GM12878 (cell line): ENCODE measurements at regions of chr6 and their contacts with region 1.

Region 1: DNA sequence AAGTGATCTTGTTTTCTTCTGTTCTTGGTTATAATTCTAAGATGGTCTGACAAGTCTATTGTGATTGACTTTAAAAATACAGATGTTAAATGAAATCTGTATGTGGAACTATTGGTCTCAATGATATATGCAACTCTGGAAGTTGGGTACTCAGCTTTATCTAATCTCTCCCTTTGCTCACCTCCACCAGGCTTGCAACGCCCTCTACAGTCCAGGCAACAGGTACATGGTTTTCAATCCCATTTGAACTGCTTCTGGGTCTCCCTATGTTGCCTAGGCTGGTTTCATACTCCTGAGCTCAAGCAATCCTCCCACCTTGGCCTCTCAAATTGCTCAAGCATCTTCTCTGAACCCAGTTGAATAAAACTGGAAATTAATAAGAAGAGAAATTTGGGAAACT is 25.6 kb upstream of the HLA-DQB1 start:
- DNase-seq: peak; percentile 50
- ATAC-seq: peak; percentile 77
- H3K4me3 ChIP-seq: no peak overlapping the region
- H3K27ac ChIP-seq: no peak overlapping the region
- H3K4me1 ChIP-seq: peaks cover 21% of the 10 kb centered on the region
- H3K27me3 ChIP-seq: no peaks in the 10 kb centered on the region; a peak in 1 of 4 replicates
- CTCF ChIP-seq: peak; percentile 68 to 84 (median 80)
- EP300 ChIP-seq: no peak
- POLR2A ChIP-seq: no peak
- RAD21 ChIP-seq: peak; percentile 97

Region 2: GRCh38 chr6:32413427-32414047 is 278.5 kb before region 1 on chr6:
- CTCF ChIA-PET with region 1: interaction called, 31 read pairs
- POLR2A ChIA-PET with region 1: no interaction called
- RAD21 ChIA-PET with region 1: interaction called, 10 read pairs
- SMC1A ChIA-PET with region 1: interaction called, 12 read pairs
- in situ Hi-C with region 1: no loop called
- intact Hi-C with region 1: no loop called
- DNase-seq: peak; percentile 40
- ATAC-seq: peak; percentile 94
- H3K4me3 ChIP-seq: no peak overlapping the region
- H3K27ac ChIP-seq: no peak overlapping the region
- H3K4me1 ChIP-seq: no peaks in the 10 kb centered on the region
- H3K27me3 ChIP-seq: no peaks in the 10 kb centered on the region; a peak in 2 of 4 replicates
- CTCF ChIP-seq: peak; percentile 84 to 96 (median 94)
- EP300 ChIP-seq: no peak
- POLR2A ChIP-seq: no peak
- RAD21 ChIP-seq: peak; percentile 83

Region 3: DNA sequence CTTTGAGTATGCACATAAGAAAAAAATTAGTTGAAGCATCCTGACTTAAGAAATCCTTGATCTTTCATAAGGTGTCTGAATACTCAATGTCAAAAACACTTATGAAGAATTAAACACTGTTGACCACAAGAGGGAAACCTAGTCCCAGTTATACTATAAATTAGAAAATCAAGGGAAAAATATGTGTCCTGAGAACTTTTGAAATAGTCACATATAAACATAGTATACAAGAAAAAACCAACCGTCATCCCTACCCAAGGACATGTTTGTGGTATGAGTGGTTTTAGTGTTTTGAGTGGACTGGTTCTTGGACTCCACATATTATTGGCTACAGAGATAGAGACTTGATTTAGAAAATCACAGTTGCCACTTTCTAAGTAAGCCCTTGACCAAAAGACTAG is 260.0 kb before region 1 on chr6:
- CTCF ChIA-PET with region 1: interaction called, 160 read pairs
- POLR2A ChIA-PET with region 1: interaction called, 12 read pairs
- RAD21 ChIA-PET with region 1: interaction called, 119 read pairs
- SMC1A ChIA-PET with region 1: interaction called, 154 read pairs
- in situ Hi-C with region 1: loop called (anchors 5 kb)
- intact Hi-C with region 1: loop called (anchors 1 kb)
- DNase-seq: no peak
- ATAC-seq: peak; percentile 55
- H3K4me3 ChIP-seq: no peak overlapping the region
- H3K27ac ChIP-seq: no peak overlapping the region
- H3K4me1 ChIP-seq: peaks cover 10% of the 10 kb centered on the region
- H3K27me3 ChIP-seq: no peaks in the 10 kb centered on the region
- CTCF ChIP-seq: peak in 2 of 3 experiments; percentile 41 to 62; a peak in 4 of 6 replicates
- EP300 ChIP-seq: no peak
- POLR2A ChIP-seq: no peak
- RAD21 ChIP-seq: peak; percentile 76

Region 4: DNA sequence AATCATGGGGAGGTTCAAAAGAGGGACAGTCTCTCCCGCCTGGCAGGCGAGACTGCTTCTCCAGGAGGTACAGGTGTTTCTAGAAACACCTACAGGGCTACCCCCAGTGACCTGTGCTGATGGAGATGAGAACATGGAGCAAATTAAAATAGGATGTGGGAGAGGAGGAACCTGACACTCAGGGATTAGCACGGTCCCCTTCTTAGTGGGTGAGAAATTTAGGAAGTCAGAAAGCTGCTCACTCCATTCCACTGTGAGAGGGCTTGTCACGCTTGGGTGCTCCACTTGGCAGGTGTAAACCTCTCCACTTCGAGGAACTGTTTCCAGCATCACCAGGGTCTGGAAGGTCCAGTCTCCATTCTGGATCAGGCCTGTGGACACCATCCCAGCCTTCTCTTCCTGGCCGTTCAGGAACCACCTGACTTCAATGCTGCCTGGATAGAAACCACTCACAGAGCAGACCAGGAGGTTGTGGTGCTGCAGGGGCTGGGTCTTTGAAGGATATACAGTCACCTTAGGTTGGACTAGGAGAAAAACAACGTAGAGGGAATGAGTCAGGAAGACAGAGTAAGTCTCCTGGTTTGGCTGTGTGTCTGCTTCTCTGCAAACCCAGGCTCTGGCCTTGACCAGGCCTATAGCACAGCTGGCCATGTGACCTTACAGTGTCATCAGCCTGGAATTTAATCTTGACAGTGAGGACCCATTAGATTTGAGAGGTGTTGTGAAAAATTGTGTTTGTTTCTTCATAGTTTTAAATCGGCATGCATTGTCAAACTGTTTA is 110.5 kb before region 1 on chr6:
- CTCF ChIA-PET with region 1: interaction called, 6 read pairs
- POLR2A ChIA-PET with region 1: interaction called, 12 read pairs
- RAD21 ChIA-PET with region 1: interaction called, 4 read pairs
- SMC1A ChIA-PET with region 1: interaction called, 3 read pairs
- in situ Hi-C with region 1: no loop called
- intact Hi-C with region 1: loop called (anchors 2 kb)
- DNase-seq: no peak
- ATAC-seq: no peak
- H3K4me3 ChIP-seq: no peak overlapping the region
- H3K27ac ChIP-seq: no peak overlapping the region
- H3K4me1 ChIP-seq: no peaks in the 10 kb centered on the region
- H3K27me3 ChIP-seq: no peaks in the 10 kb centered on the region
- CTCF ChIP-seq: no peak
- EP300 ChIP-seq: no peak
- POLR2A ChIP-seq: peak; percentile 43
- RAD21 ChIP-seq: no peak

Region 5: GRCh38 chr6:32622545-32623401 is 69.2 kb before region 1 on chr6:
- CTCF ChIA-PET with region 1: interaction called, 12 read pairs
- POLR2A ChIA-PET with region 1: interaction called, 7 read pairs
- RAD21 ChIA-PET with region 1: interaction called, 33 read pairs
- SMC1A ChIA-PET with region 1: interaction called, 26 read pairs
- in situ Hi-C with region 1: no loop called
- intact Hi-C with region 1: loop called (anchors 1 kb)
- DNase-seq: peak; percentile 96
- ATAC-seq: peak; percentile 91
- H3K4me3 ChIP-seq: peak overlapping the region; percentile 54
- H3K27ac ChIP-seq: peak overlapping the region; percentile 98
- H3K4me1 ChIP-seq: peaks cover 24% of the 10 kb centered on the region
- H3K27me3 ChIP-seq: no peaks in the 10 kb centered on the region
- CTCF ChIP-seq: peak; percentile 33 to 49 (median 48); a peak in 5 of 6 replicates
- EP300 ChIP-seq: peak in 1 of 2 experiments; percentile 96
- POLR2A ChIP-seq: peak; percentile 72
- RAD21 ChIP-seq: peak; percentile 40; the same call in 1 of the 2 replicates

Region 6: DNA sequence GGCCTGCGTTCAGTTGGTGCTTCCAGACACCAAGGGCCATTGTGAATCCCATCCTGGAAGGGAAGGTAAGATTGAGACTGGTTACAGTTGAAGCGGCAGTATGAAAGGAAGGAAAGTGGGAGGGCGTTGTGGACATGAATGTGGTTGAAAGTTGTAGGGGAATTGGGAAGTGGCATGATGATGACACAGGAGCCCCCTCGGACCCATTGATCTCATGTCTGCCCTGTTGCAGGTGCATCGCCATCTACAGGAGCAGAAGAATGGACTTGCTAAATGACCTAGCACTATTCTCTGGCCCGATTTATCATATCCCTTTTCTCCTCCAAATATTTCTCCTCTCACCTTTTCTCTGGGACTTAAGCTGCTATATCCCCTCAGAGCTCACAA is 49.3 kb before region 1 on chr6:
- CTCF ChIA-PET with region 1: interaction called, 11 read pairs
- POLR2A ChIA-PET with region 1: interaction called, 21 read pairs
- RAD21 ChIA-PET with region 1: interaction called, 20 read pairs
- SMC1A ChIA-PET with region 1: interaction called, 9 read pairs
- in situ Hi-C with region 1: no loop called
- intact Hi-C with region 1: no loop called
- DNase-seq: no peak
- ATAC-seq: peak; percentile 45
- H3K4me3 ChIP-seq: no peak overlapping the region
- H3K27ac ChIP-seq: no peak overlapping the region
- H3K4me1 ChIP-seq: peaks cover 4% of the 10 kb centered on the region
- H3K27me3 ChIP-seq: no peaks in the 10 kb centered on the region
- CTCF ChIP-seq: peak in 1 of 3 experiments; percentile 2; a peak in 1 of 6 replicates
- EP300 ChIP-seq: no peak
- POLR2A ChIP-seq: peak; percentile 53; the same call in 1 of the 2 replicates
- RAD21 ChIP-seq: no peak

Region 7: DNA sequence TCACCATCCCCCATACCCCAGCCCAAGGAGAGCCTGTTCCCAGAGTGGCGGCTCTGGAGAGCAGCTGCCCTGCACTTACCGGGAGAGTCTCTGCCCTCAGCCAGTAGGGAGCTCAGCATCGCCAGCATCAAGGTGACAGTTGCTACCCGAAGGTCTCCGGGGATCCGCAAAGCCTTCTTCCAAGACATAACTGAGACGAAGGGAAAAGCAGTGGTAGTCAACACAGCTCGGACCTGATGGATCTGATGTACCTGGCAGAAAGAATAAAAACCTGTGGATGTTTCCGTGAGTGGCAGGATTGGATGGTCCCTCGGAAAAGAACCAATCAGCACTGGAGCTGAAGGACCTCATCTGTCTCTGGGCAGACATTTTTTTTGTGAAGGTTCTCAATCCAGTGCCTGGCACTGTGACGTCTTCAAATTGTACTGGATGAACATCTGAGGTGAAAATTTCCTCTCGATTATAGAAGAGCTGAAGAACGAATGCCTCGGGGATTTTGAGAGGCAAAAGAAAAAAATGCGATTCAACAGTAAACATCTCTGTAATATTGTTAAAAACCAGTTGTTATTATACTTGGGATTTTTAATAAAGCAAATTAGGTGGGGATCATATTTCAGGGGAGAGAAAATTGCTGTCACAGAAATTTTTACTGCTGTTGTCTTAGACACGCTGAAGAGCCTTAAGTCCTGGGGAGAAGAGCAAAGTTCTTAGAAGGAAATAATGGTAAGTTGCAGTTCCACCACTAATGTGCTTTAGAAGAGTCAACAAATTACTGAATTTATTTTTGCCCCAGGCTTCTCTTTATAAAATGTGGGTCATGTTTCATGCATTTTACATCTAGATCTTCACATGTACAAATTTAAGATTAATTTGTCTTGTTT is 25.4 kb before region 1 on chr6 and contains the start of gene HLA-DQB1:
- CTCF ChIA-PET with region 1: interaction called, 16 read pairs
- POLR2A ChIA-PET with region 1: interaction called, 130 read pairs
- RAD21 ChIA-PET with region 1: interaction called, 16 read pairs
- SMC1A ChIA-PET with region 1: interaction called, 94 read pairs
- in situ Hi-C with region 1: no loop called
- intact Hi-C with region 1: no loop called
- DNase-seq: peak; percentile 77
- ATAC-seq: peak; percentile 70
- H3K4me3 ChIP-seq: peak within 1 kb of the TSS; percentile 55; the same call in 1 of the 2 replicates
- H3K27ac ChIP-seq: peak within 1 kb of the TSS; percentile 92
- H3K4me1 ChIP-seq: peaks cover 22% of the 10 kb centered on the region
- H3K27me3 ChIP-seq: no peaks in the 10 kb centered on the region
- CTCF ChIP-seq: no peak
- EP300 ChIP-seq: no peak
- POLR2A ChIP-seq: peak; percentile 72
- RAD21 ChIP-seq: no peak
- polyA plus RNA-seq, gene HLA-DQB1: 38.1 to 66.1 TPM

Region 8: GRCh38 chr6:32894080-32895005 is 202.3 kb after region 1 on chr6:
- CTCF ChIA-PET with region 1: no interaction called
- POLR2A ChIA-PET with region 1: no interaction called
- RAD21 ChIA-PET with region 1: no interaction called
- SMC1A ChIA-PET with region 1: no interaction called
- in situ Hi-C with region 1: no loop called
- intact Hi-C with region 1: no loop called
- DNase-seq: peak; percentile 91
- ATAC-seq: peak; percentile 98
- H3K4me3 ChIP-seq: peak overlapping the region; percentile 81
- H3K27ac ChIP-seq: peak overlapping the region; percentile 90
- H3K4me1 ChIP-seq: peaks cover 12% of the 10 kb centered on the region
- H3K27me3 ChIP-seq: no peaks in the 10 kb centered on the region
- CTCF ChIP-seq: no peak; a peak in 1 of 6 replicates
- EP300 ChIP-seq: no peak
- POLR2A ChIP-seq: peak; percentile 83
- RAD21 ChIP-seq: no peak

Region 9: DNA sequence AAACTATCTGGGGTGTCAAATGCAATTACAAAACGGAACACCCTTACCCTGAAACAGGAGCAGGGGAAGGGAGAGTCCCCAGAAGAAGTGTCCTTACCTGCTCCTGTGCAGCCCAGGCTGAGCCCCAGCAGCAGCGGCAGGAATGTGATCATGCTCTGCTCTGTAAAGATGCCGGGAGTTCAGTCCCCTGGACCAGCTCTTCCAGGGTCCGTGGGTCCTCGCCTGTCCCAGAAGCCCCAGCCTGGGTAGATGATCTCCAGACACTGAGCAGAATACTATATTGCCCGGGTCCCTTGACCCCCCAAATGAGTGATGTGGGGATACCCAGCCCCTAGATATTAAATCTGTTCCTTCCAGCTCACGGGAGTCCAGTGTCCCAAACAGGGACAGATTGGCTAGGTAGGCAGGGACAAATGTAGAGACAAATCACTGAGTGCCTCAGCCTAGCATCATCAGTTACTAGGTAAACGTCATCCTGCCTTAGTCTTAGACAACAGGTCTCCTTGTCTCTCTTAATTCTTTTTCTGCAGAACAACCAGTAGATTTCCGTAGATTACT is 248.7 kb after region 1 on chr6 and contains the start of gene HLA-DMB:
- CTCF ChIA-PET with region 1: no interaction called
- POLR2A ChIA-PET with region 1: no interaction called
- RAD21 ChIA-PET with region 1: no interaction called
- SMC1A ChIA-PET with region 1: no interaction called
- in situ Hi-C with region 1: no loop called
- intact Hi-C with region 1: no loop called
- DNase-seq: peak; percentile 97
- ATAC-seq: peak; percentile 74
- H3K4me3 ChIP-seq: peak within 1 kb of the TSS; percentile 79
- H3K27ac ChIP-seq: peak within 1 kb of the TSS; percentile 96
- H3K4me1 ChIP-seq: peaks cover 41% of the 10 kb centered on the region
- H3K27me3 ChIP-seq: no peaks in the 10 kb centered on the region
- CTCF ChIP-seq: no peak
- EP300 ChIP-seq: no peak
- POLR2A ChIP-seq: peak; percentile 71
- RAD21 ChIP-seq: no peak
- polyA plus RNA-seq, gene HLA-DMB: 117 to 170 TPM

Region 10: DNA sequence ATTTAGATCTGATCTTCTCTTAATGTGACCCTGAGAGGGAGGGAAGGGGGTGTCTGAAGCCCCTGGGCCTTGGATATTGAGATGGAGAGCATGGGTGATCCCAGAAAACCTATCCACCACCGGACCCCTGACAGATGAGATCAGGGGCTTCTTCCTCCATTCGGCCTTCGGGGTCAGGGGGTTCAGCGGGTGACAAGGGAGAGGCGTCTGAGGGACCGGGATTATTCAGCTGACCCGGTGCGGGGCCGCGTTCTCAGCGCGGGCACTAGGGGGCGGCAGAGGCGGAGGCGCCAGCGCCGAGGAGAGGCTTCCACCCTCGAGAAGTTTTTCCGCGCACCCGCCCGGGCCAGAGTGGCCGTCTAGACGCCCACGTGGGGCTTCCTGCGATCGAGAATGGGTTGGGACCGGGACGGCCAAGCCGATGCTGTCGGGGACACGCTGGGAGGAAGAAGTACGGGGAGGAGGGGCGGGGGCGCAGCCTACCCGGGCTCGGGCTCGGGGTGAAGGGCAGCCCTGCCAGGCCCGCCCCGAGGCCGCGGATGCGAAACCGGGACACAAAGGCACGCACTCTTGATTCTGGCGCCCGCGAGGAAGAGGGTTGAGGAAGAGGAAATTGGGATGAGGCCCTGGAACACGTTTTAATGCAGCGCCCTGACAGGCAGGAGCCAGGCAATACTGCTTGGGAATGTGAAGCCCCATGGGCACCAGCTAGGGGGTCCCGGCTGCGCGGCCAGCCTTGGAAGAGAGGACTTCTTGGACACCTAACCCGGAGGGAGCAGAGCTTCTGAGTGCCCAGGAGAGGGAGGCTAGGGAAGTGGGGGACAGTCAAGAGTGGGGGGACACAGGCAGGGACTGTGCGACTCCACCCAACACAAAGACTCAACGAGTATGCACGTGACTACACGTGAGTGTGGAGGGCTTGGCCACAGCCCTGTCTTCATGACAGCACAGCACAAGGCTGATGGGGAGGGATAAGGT is 469.6 kb after region 1 on chr6:
- CTCF ChIA-PET with region 1: no interaction called
- POLR2A ChIA-PET with region 1: no interaction called
- RAD21 ChIA-PET with region 1: no interaction called
- SMC1A ChIA-PET with region 1: no interaction called
- in situ Hi-C with region 1: no loop called
- intact Hi-C with region 1: no loop called
- DNase-seq: no peak
- ATAC-seq: peak; percentile 96
- H3K4me3 ChIP-seq: peak overlapping the region; percentile 70; the same call in 1 of the 2 replicates
- H3K27ac ChIP-seq: no peak overlapping the region
- H3K4me1 ChIP-seq: peaks cover 4% of the 10 kb centered on the region
- H3K27me3 ChIP-seq: no peaks in the 10 kb centered on the region
- CTCF ChIP-seq: peak; percentile 89 to 97 (median 96); a peak in 5 of 6 replicates
- EP300 ChIP-seq: no peak
- POLR2A ChIP-seq: no peak
- RAD21 ChIP-seq: peak; percentile 64